Ascending aorta (tissue), 2 donors: ENCODE measurements at regions of chr7 and their contacts with region 1.

Region 1: GRCh38 chr7:148932-149855 is 43.2 kb upstream of the FAM20C start:
- DNase-seq: peak; percentile 96 to 99
- H3K4me3 ChIP-seq: peak overlapping the region; percentile 60 to 67
- H3K27ac ChIP-seq: peak overlapping the region; percentile 90 to 97
- H3K4me1 ChIP-seq: peaks cover 0 to 7% of the 10 kb centered on the region in 2 donors
- H3K27me3 ChIP-seq: no peaks in the 10 kb centered on the region
- CTCF ChIP-seq: no peak

Region 2: DNA sequence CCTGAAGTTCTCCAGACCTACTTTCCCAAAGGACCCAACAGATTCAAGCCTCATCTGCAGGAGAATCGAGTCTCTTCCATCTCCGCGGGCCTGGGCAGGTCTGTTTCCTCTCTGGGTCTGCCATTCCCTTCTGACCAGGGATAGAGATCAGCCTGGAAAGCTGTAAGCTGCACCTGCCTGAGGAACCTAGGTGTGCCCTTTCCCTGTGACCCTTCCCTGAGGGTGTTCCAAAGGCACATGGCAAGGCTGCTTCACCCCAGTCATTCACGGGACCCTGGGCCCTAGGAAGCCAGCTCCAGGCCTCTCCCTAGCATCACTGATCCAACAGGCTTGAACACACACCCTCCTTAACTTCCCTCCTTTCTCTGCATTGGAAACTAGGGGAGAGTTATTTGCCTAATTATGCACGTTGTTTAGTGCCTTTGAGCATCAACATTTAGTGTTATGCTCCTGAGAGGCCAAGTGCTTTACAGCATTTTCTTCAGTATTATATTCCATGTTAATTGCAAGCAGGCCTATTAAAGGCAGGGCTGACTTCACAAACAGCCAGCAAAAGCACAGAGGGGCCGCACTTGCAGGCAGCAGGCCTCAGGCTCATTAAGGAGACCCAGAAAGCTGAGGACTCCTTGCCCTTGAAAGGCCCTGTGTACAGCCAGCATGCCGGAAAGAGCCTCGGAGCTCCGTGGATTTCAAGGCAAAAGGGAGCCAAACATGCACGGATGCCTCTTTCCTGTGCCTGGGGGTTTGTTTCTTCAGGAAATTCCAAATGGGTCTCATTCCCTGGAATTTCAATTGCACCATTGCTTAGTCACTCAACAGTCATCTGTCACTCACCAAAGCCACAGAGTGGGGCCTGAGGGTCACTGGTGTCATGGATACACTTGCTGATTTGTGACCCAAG is 47.8 kb before region 1 on chr7:
- intact Hi-C with region 1: no loop called
- DNase-seq: no peak
- H3K4me3 ChIP-seq: no peak overlapping the region
- H3K27ac ChIP-seq: no peak overlapping the region
- H3K4me1 ChIP-seq: no peaks in the 10 kb centered on the region
- H3K27me3 ChIP-seq: no peaks in the 10 kb centered on the region
- CTCF ChIP-seq: no peak

Region 3: GRCh38 chr7:129366-130221 is 19.6 kb before region 1 on chr7:
- intact Hi-C with region 1: loop called (anchors 1 kb)
- DNase-seq: peak in 1 of 2 donors; percentile 86
- H3K4me3 ChIP-seq: peak overlapping the region; percentile 16 to 27
- H3K27ac ChIP-seq: peak overlapping the region; percentile 41 to 66
- H3K4me1 ChIP-seq: peaks cover 5 to 6% of the 10 kb centered on the region in 2 donors
- H3K27me3 ChIP-seq: no peaks in the 10 kb centered on the region
- CTCF ChIP-seq: no peak

Region 4: GRCh38 chr7:160958-161725 is 11.9 kb after region 1 on chr7:
- intact Hi-C with region 1: loop called (anchors 1 kb)
- DNase-seq: no peak
- H3K4me3 ChIP-seq: no peak overlapping the region
- H3K27ac ChIP-seq: no peak overlapping the region
- H3K4me1 ChIP-seq: no peaks in the 10 kb centered on the region
- H3K27me3 ChIP-seq: no peaks in the 10 kb centered on the region
- CTCF ChIP-seq: no peak

Region 5: DNA sequence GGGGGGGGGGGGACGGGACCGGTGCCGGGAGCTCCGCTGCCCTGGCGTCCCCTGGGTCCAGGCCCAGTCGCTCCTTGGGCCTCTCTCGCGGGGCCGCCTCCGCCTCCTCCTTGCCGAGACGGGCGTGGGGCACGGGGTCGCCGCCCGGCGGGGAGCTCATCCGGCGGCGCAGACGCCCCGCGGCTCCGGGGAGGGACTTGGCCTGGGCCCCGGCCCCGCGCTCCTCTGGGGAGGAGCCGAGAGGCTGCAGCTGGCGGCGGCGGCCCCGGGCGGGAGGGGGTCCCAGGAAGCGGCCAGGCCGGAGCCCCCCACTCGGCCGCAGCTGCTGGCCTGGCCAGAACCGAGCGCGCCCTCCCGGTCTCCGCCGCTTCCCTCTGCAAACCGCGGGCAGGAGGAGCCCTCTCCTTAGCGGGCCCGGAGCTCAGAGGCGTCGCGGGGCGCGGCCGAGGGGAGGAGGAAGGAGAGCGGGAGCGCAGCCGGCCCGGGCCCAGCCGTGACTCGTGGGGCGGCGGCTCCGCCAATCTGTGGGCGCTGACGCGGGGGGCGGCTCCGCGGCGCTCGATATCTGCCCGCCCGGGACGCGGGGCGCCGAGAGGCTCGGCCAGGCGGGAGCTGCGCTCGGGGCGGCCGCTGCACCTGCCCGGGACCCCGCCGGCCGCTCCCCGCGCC is 42.9 kb after region 1 on chr7 and contains the start of gene FAM20C:
- intact Hi-C with region 1: loop called (anchors 1 kb)
- DNase-seq: peak; percentile 25 to 90
- H3K4me3 ChIP-seq: peak within 1 kb of the TSS; percentile 82 to 83
- H3K27ac ChIP-seq: peak within 1 kb of the TSS; percentile 89 to 92
- H3K4me1 ChIP-seq: peaks cover 17 to 26% of the 10 kb centered on the region in 2 donors
- H3K27me3 ChIP-seq: no peaks in the 10 kb centered on the region
- CTCF ChIP-seq: no peak
- total RNA-seq, gene FAM20C: 90.8 TPM

Region 6: DNA sequence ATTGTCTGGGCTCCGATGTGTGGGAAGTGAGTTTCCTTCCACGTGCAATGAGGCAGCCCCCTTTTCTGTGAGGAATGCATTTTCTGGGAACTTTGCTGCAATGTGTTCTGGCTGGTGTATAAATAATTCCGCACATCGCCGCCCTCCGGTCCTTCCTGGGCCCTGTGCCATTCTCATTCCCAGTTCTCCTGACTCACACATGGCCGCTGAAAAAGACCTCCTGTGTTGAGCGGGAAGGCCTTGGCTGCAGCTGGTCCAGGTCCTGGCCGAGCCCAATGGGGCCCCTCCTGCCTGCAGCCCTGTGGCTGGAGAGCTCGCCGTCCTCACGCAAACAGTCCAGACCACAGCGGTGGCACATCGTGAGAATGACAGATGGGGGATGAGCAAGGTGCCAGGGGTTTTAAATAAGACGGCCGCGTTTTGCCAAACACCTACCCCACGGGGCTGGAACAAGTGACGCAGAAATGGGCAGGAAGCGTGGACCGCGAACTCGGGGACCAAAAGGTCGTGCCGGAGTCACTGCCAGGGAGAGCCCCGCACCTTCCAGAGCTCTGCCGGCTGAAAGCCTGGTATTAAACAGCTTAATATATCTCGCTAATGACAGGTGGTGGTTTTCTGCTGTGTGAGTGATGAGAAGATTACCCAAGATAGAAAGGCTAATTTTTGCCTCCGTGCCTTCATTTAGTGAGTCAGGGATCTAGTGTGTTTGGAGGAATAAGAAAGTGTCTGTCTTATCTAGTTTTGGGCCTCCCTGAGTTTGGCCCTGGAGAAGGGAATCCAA is 80.2 kb after region 1 on chr7:
- intact Hi-C with region 1: loop called (anchors 1 kb)
- DNase-seq: peak; percentile 71 to 96
- H3K4me3 ChIP-seq: peak overlapping the region in 1 of 2 donors; percentile 33
- H3K27ac ChIP-seq: peak overlapping the region; percentile 92 to 95
- H3K4me1 ChIP-seq: peaks cover 33 to 55% of the 10 kb centered on the region in 2 donors
- H3K27me3 ChIP-seq: no peaks in the 10 kb centered on the region
- CTCF ChIP-seq: no peak